PC-3 (cell line): ENCODE measurements at regions of chr19 and their contacts with region 1.

Region 1: GRCh38 chr19:1249298-1249989 is 1.1 kb downstream of the MIDN start:
- DNase-seq: peak; percentile 88
- ATAC-seq: peak; percentile 14
- H3K4me3 ChIP-seq: peak overlapping the region; percentile 86
- H3K27ac ChIP-seq: peak overlapping the region; percentile 88
- H3K4me1 ChIP-seq: peaks cover 33% of the 10 kb centered on the region
- H3K27me3 ChIP-seq: no peaks in the 10 kb centered on the region
- CTCF ChIP-seq: no peak

Region 2: DNA sequence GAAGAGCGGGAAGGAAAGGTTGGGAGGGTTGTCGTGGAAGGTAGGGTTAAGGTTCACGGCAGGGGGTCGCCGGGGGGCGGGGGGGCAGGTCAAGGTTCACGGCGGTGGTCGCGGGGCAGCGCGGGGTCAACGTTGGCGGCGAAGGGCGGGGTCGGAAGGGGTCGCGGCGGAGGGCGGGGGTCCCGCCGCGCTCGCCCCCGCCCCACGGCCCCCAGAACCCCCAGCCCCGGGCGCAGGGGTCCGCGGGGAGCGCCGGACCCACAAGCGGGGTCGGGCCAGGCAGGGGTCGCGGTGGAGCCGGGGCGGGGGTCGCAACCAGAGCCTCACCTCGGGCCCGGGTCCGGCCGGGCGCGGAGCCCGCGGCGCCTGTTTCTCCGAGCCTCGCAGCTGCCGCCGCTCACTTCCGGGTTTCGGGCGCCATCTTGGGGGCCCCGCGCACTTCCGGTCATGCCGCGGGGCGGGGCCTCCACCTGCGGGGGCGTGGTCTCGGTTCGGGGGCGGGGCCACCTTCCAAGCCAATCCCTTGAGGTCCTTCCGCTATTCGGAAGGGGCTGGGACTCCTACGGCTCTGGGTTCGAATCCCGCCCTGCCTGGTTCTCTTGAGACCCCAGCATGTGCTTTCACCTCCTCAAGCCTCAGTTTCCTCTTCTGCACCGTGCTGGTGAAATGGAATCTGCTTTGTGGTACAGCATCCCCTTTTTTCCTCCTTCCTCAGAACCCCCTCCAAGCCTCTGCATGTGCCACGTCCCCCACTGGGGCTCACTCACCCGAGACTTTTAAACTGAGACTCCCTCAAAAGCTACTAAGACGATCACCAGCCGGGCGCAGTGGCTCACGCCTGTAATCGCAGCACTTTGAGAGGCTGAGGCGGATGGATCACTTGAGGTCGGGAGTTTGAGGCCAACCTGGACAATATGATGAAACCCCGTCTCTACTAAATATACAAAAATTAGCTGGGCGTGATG is 75.3 kb before region 1 on chr19 and contains the start of gene SBNO2:
- CTCF ChIA-PET with region 1: no interaction called
- POLR2A ChIA-PET with region 1: no interaction called
- intact Hi-C with region 1: no loop called
- DNase-seq: peak; percentile 84
- ATAC-seq: peak; percentile 3; the same call in 1 of the 2 replicates
- H3K4me3 ChIP-seq: peak within 1 kb of the TSS; percentile 82
- H3K27ac ChIP-seq: peak within 1 kb of the TSS; percentile 98
- H3K4me1 ChIP-seq: peaks cover 64% of the 10 kb centered on the region
- H3K27me3 ChIP-seq: no peaks in the 10 kb centered on the region
- CTCF ChIP-seq: no peak
- total RNA-seq, gene SBNO2: 62.4 and 75.0 TPM in 2 replicates

Region 3: GRCh38 chr19:2016041-2016807 is 766.8 kb after region 1 on chr19:
- CTCF ChIA-PET with region 1: no interaction called
- POLR2A ChIA-PET with region 1: no interaction called
- intact Hi-C with region 1: no loop called
- DNase-seq: peak; percentile 62
- ATAC-seq: peak; percentile 72
- H3K4me3 ChIP-seq: no peak overlapping the region
- H3K27ac ChIP-seq: no peak overlapping the region
- H3K4me1 ChIP-seq: peaks cover 3% of the 10 kb centered on the region; the same call in 1 of the 2 replicates
- H3K27me3 ChIP-seq: no peaks in the 10 kb centered on the region
- CTCF ChIP-seq: no peak

Region 4: DNA sequence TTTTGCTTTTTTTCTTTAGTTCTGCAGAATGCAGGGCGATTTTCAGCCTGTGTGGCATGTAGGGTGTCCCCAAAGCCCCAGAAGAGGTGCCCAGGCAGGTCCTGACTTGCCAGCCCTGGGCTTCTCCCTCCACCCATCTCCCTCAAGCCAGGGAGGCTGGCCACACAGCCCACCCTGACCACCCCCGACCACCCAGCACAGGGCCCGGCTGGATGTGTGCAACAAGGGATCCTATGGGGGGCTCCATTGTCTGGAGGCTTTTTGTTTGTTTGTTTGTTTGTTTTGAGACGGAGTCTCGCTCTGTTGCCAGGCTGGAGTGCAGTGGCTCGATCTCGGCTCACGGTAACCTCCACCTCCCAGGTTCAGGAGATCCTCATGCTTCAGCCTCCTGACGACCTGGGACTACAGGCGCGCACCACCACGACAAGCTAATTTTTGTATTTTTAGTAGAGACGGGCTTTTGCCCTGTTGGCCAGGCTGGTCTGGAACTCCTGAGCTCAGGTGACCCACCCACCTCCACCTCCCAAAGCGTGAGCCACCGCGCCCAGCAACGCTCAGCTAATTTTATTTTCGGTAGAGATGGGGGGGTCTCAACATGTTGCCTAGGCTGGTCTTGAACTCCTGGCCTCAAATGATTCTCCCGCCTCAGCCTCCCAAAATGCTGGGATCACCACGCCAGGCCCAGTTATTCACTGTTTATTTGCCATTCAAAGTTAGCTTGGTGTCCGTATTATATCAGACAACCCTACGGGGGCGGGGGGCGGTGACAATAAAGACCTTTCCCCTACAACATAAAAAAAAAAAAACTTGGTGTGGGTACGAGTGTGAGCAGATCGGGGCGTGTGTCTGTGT is 809.4 kb after region 1 on chr19:
- CTCF ChIA-PET with region 1: no interaction called
- POLR2A ChIA-PET with region 1: interaction called, 14 read pairs
- intact Hi-C with region 1: no loop called
- DNase-seq: no peak
- ATAC-seq: no peak
- H3K4me3 ChIP-seq: peak overlapping the region; percentile 38; the same call in 1 of the 2 replicates
- H3K27ac ChIP-seq: peak overlapping the region; percentile 98
- H3K4me1 ChIP-seq: peaks cover 41% of the 10 kb centered on the region
- H3K27me3 ChIP-seq: no peaks in the 10 kb centered on the region
- CTCF ChIP-seq: no peak